Esophagus muscularis mucosa (tissue), 4 donors: ENCODE measurements at regions of chr18 and their contacts with region 1.

Region 1: DNA sequence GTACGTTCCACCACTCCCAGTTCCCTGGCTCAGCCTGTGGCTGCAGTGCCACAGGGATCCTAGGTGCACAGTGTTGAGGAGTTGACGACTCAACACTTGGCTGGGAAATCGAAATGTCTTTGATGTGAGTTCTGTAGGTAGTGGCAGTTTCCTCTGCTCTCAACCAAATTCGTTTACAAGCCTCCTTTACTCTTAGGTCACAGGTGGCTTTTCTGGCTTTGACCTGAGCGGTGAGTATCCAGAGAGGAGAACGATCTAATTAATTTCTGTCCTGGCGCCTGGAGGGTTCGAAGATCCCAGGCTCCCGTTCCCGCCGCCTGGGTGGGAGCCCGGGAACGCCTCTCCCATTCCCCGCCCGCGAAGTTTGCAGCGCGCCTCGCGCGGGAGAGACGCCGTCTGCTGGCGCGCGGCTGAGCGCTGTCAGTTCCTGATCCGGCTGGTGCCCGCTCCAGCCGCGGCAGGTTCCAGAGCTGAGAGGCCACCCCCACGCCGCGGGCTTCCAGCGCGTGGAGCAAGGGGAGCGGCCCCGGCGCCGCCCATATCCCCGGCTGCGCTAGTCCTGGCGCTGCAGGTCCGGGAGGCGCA is at the start of gene LAMA3:
- DNase-seq: no peak
- H3K4me3 ChIP-seq: peak within 1 kb of the TSS; percentile 67 to 85 (median 72)
- H3K27ac ChIP-seq: peak within 1 kb of the TSS; percentile 66 to 80 (median 69)
- H3K4me1 ChIP-seq: peaks cover 7 to 27% (median 24%) of the 10 kb centered on the region in 4 donors
- H3K27me3 ChIP-seq: peaks cover 0 to 11% (median 0%) of the 10 kb centered on the region in 4 donors
- CTCF ChIP-seq: peak in 2 of 3 experiments; percentile 8 to 40
- EP300 ChIP-seq: no peak
- POLR2A ChIP-seq: no peak
- total RNA-seq, gene LAMA3: 7.5 to 12.9 (median 11.7) TPM

Region 2: GRCh38 chr18:23619388-23619881 is 69.7 kb before region 1 on chr18:
- intact Hi-C with region 1: loop called (anchors 5 kb)
- DNase-seq: no peak
- H3K4me3 ChIP-seq: peak overlapping the region; percentile 54 to 63 (median 56)
- H3K27ac ChIP-seq: peak overlapping the region; percentile 85 to 91 (median 90)
- H3K4me1 ChIP-seq: peaks cover 13 to 44% (median 24%) of the 10 kb centered on the region in 4 donors
- H3K27me3 ChIP-seq: no peaks in the 10 kb centered on the region
- CTCF ChIP-seq: peak in 1 of 3 experiments; percentile 17
- EP300 ChIP-seq: no peak
- POLR2A ChIP-seq: no peak

Region 3: GRCh38 chr18:23664674-23665073 is 24.4 kb before region 1 on chr18:
- intact Hi-C with region 1: loop called (anchors 2 kb)
- DNase-seq: no peak
- H3K4me3 ChIP-seq: no peak overlapping the region
- H3K27ac ChIP-seq: no peak overlapping the region
- H3K4me1 ChIP-seq: peaks cover 11 to 19% (median 17%) of the 10 kb centered on the region in 4 donors
- H3K27me3 ChIP-seq: peaks cover 0 to 3% (median 0%) of the 10 kb centered on the region in 4 donors
- CTCF ChIP-seq: no peak
- EP300 ChIP-seq: no peak
- POLR2A ChIP-seq: no peak